Naive thymus-derived CD4-positive, alpha-beta T cell (primary cell): ENCODE measurements at regions of chr3 and their contacts with region 1.

Region 1: GRCh38 chr3:57397175-57398026 is 104.9 kb upstream of the ASB14 start:
- DNase-seq: peak; percentile 22 to 77 (median 69)
- ATAC-seq: peak; percentile 98
- H3K4me3 ChIP-seq: peak overlapping the region; percentile 45
- H3K4me3 Mint-ChIP-seq: peak overlapping the region; percentile 39 to 75 (median 63)
- H3K27ac ChIP-seq: no peak overlapping the region
- H3K27ac Mint-ChIP-seq: peak overlapping the region; percentile 6 to 76 (median 66)
- H3K4me1 ChIP-seq: peaks cover 0 to 7% of the 10 kb centered on the region in 2 donors
- H3K4me1 Mint-ChIP-seq: peaks cover 8 to 26% (median 20%) of the 10 kb centered on the region in 7 donors
- H3K27me3 ChIP-seq: no peaks in the 10 kb centered on the region
- H3K27me3 Mint-ChIP-seq: peaks cover 0 to 25% (median 9%) of the 10 kb centered on the region in 5 donors

Region 2: GRCh38 chr3:56682462-56683121 is 714.8 kb before region 1 on chr3:
- CTCF ChIA-PET with region 1: no interaction called
- POLR2A ChIA-PET with region 1: no interaction called
- intact Hi-C with region 1: loop called in 1 of 2 experiments (anchors 5 kb)
- DNase-seq: peak; percentile 70 to 84 (median 79)
- ATAC-seq: peak; percentile 81
- H3K4me3 ChIP-seq: peak overlapping the region; percentile 93
- H3K4me3 Mint-ChIP-seq: peak overlapping the region; percentile 88 to 100 (median 94)
- H3K27ac ChIP-seq: peak overlapping the region; percentile 92
- H3K27ac Mint-ChIP-seq: peak overlapping the region; percentile 90 to 100 (median 94)
- H3K4me1 ChIP-seq: peaks cover 33 to 34% of the 10 kb centered on the region in 2 donors
- H3K4me1 Mint-ChIP-seq: peaks cover 28 to 55% (median 48%) of the 10 kb centered on the region in 7 donors
- H3K27me3 ChIP-seq: no peaks in the 10 kb centered on the region
- H3K27me3 Mint-ChIP-seq: no peaks in the 10 kb centered on the region

Region 3: DNA sequence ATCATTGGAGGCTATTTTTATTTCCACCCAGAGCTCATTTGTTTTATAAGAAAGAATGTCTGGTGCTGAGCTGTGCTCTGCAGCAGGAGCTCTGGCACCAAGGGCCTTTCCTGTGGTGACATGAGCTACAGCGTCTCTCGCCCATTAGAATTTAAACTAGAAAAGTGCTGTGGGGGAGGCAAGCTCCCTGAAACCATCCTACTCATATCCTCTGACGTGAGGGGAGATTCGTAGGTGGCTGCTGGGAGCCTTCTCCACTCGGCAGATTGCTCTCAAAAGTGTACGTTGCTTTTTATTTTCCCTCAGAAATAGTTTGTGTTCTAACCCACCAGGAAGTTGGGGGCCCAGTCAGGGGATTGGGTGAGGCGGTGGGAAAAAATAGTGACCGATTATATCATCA is 519.3 kb before region 1 on chr3:
- CTCF ChIA-PET with region 1: no interaction called
- POLR2A ChIA-PET with region 1: no interaction called
- intact Hi-C with region 1: no loop called
- DNase-seq: peak in 7 of 9 donors; percentile 29 to 65 (median 49)
- ATAC-seq: peak; percentile 84
- H3K4me3 ChIP-seq: no peak overlapping the region
- H3K4me3 Mint-ChIP-seq: peak overlapping the region; percentile 48 to 85 (median 73)
- H3K27ac ChIP-seq: peak overlapping the region; percentile 57
- H3K27ac Mint-ChIP-seq: peak overlapping the region; percentile 79 to 95 (median 91)
- H3K4me1 ChIP-seq: peaks cover 10 to 57% of the 10 kb centered on the region in 2 donors
- H3K4me1 Mint-ChIP-seq: peaks cover 33 to 88% (median 78%) of the 10 kb centered on the region in 7 donors
- H3K27me3 ChIP-seq: no peaks in the 10 kb centered on the region
- H3K27me3 Mint-ChIP-seq: no peaks in the 10 kb centered on the region

Region 4: GRCh38 chr3:57555738-57556458 is 158.5 kb after region 1 on chr3 and contains the start of gene PDE12:
- CTCF ChIA-PET with region 1: interaction called, 4 read pairs
- POLR2A ChIA-PET with region 1: interaction called, 10 read pairs
- intact Hi-C with region 1: loop called (anchors 1 kb)
- DNase-seq: peak; percentile 68 to 87 (median 81)
- ATAC-seq: peak; percentile 86
- H3K4me3 ChIP-seq: peak within 1 kb of the TSS; percentile 74
- H3K4me3 Mint-ChIP-seq: peak within 1 kb of the TSS; percentile 85 to 99 (median 92)
- H3K27ac ChIP-seq: peak within 1 kb of the TSS; percentile 96
- H3K27ac Mint-ChIP-seq: peak within 1 kb of the TSS; percentile 94 to 99 (median 98)
- H3K4me1 ChIP-seq: peaks cover 22 to 26% of the 10 kb centered on the region in 2 donors
- H3K4me1 Mint-ChIP-seq: peaks cover 13 to 50% (median 39%) of the 10 kb centered on the region in 7 donors
- H3K27me3 ChIP-seq: no peaks in the 10 kb centered on the region
- H3K27me3 Mint-ChIP-seq: no peaks in the 10 kb centered on the region
- total RNA-seq, gene PDE12: 24.0 to 35.5 (median 27.8) TPM

Region 5: DNA sequence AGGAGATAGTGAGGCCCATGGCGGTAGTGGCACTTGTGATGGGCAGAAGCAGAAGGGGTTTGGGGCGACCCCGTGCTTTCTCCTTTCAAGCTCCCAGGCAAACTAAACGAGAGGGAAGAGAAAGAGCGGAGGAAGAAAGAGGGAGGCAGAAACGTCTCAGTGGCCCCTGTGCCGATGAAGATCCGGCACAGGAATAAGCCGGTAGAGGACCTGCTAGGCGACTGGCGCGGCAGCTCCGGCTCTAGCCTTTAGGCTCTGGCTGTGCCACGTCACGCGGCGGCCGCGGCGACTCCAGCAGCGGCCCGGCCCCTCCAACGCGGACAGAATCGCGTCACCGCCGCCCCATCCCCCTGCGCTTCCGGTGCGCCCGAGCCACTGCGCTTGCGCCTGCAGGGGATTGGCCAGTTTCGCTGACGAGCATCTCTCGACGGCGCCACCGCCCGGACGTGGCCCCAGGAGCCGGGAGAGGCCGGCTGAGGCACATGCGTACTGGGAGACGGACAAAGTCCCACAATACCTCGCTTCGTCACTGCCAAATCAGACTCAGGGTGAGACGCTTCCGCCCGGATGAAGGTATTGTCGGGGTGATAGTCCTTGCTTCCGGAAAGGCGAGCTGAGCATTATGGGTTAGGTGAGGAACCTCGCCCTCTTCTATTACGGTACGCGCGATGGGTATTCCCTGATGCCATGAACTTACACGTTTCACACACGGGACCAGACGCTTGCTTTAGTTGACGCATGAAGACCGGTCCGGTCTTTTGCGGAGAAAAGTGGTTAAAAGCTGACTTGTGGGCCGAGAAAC is 199.9 kb after region 1 on chr3 and contains the start of gene ARF4:
- CTCF ChIA-PET with region 1: interaction called, 3 read pairs
- POLR2A ChIA-PET with region 1: interaction called, 4 read pairs
- intact Hi-C with region 1: loop called (anchors 1 kb)
- DNase-seq: peak; percentile 99 to 100 (median 100)
- ATAC-seq: peak; percentile 93
- H3K4me3 ChIP-seq: peak within 1 kb of the TSS; percentile 86
- H3K4me3 Mint-ChIP-seq: peak within 1 kb of the TSS; percentile 91 to 99 (median 98)
- H3K27ac ChIP-seq: peak within 1 kb of the TSS; percentile 94
- H3K27ac Mint-ChIP-seq: peak within 1 kb of the TSS; percentile 95 to 100 (median 99)
- H3K4me1 ChIP-seq: peaks cover 29 to 30% of the 10 kb centered on the region in 2 donors
- H3K4me1 Mint-ChIP-seq: peaks cover 33 to 64% (median 51%) of the 10 kb centered on the region in 7 donors
- H3K27me3 ChIP-seq: no peaks in the 10 kb centered on the region
- H3K27me3 Mint-ChIP-seq: no peaks in the 10 kb centered on the region
- total RNA-seq, gene ARF4: 50.9 to 85.5 (median 57.5) TPM

Region 6: GRCh38 chr3:57755668-57756527 is 358.5 kb after region 1 on chr3 and contains the start of gene SLMAP:
- CTCF ChIA-PET with region 1: no interaction called
- POLR2A ChIA-PET with region 1: no interaction called
- intact Hi-C with region 1: loop called (anchors 1 to 5 kb)
- DNase-seq: peak; percentile 84 to 97 (median 95)
- ATAC-seq: peak; percentile 98
- H3K4me3 ChIP-seq: peak within 1 kb of the TSS; percentile 80
- H3K4me3 Mint-ChIP-seq: peak within 1 kb of the TSS; percentile 92 to 98 (median 97)
- H3K27ac ChIP-seq: peak within 1 kb of the TSS; percentile 84
- H3K27ac Mint-ChIP-seq: peak within 1 kb of the TSS; percentile 88 to 96 (median 92)
- H3K4me1 ChIP-seq: peaks cover 23 to 29% of the 10 kb centered on the region in 2 donors
- H3K4me1 Mint-ChIP-seq: peaks cover 17 to 45% (median 41%) of the 10 kb centered on the region in 7 donors
- H3K27me3 ChIP-seq: no peaks in the 10 kb centered on the region
- H3K27me3 Mint-ChIP-seq: peaks cover 0 to 8% (median 0%) of the 10 kb centered on the region in 5 donors
- total RNA-seq, gene SLMAP: 54.6 to 77.1 (median 66.6) TPM

Region 7: DNA sequence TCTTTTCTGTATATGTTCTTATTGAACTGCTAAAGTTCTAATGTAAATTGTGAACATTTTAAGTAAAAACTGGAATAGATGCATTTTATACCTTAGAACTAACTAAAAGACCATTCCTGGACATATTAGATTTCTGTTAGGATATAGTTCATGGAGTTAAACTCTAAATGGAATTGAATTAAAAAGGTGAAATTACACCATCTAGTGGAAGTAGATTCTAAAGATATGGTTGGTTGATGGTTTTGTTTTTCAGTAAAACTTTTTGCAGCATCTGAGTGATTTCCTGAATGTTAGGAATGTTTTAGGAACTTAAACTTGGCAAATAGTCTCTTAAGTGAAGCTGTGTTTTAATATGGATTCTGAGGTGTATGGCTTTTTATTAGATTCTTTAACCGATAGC is 455.5 kb after region 1 on chr3:
- CTCF ChIA-PET with region 1: interaction called, 7 read pairs
- POLR2A ChIA-PET with region 1: no interaction called
- intact Hi-C with region 1: loop called in 1 of 2 experiments (anchors 2 kb)
- DNase-seq: no peak
- ATAC-seq: no peak
- H3K4me3 ChIP-seq: no peak overlapping the region
- H3K4me3 Mint-ChIP-seq: no peak overlapping the region
- H3K27ac ChIP-seq: no peak overlapping the region
- H3K27ac Mint-ChIP-seq: no peak overlapping the region
- H3K4me1 ChIP-seq: no peaks in the 10 kb centered on the region
- H3K4me1 Mint-ChIP-seq: peaks cover 0 to 4% (median 0%) of the 10 kb centered on the region in 7 donors
- H3K27me3 ChIP-seq: no peaks in the 10 kb centered on the region
- H3K27me3 Mint-ChIP-seq: no peaks in the 10 kb centered on the region